G401 (cell line): ENCODE measurements at regions of chr10 and their contacts with region 1.

Region 1: GRCh38 chr10:100346765-100347567 is at the start of gene SCD:
- DNase-seq: peak; percentile 93
- total RNA-seq, gene SCD: 464 and 607 TPM in 2 replicates

Region 2: DNA sequence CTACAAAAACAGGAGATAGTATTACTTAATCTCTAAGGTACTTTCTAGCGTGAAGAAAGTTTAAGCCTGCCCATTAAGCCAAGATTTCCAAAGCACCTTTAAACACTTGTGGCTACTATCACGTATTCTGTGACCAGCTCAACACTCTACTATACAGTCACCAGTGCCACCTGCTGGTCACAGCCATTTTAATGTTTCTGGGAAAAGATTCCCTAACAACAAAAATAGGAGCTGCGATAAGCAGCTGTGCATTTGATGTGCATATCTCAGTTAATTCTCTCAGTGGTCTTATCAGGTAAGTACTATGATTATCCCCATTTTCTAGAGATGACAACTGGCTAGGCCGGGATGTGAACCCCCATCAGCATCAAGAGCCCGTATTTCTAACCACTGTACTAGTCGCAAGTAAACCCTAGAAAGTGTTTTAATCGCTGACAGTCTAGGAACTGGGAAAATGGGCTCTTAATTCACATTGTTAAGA is 171.8 kb after region 1 on chr10:
- in situ Hi-C with region 1: loop called (anchors 25 kb)
- DNase-seq: peak; percentile 84